ENCODE measurements at regions of chr1 and their contacts with region 1.

Region 1: GRCh38 chr1:231337472-231338269 is at the start of gene EXOC8:
- DNase-seq: peak; percentile 100
- H3K4me3 Mint-ChIP-seq: peak within 1 kb of the TSS; percentile 98
- H3K27ac Mint-ChIP-seq: peak within 1 kb of the TSS; percentile 97
- H3K4me1 Mint-ChIP-seq: peaks cover 49% of the 10 kb centered on the region
- H3K27me3 Mint-ChIP-seq: no peaks in the 10 kb centered on the region
- CTCF ChIP-seq: peak; percentile 18
- total RNA-seq, gene EXOC8: 24.0 and 28.5 TPM in 2 replicates

Region 2: DNA sequence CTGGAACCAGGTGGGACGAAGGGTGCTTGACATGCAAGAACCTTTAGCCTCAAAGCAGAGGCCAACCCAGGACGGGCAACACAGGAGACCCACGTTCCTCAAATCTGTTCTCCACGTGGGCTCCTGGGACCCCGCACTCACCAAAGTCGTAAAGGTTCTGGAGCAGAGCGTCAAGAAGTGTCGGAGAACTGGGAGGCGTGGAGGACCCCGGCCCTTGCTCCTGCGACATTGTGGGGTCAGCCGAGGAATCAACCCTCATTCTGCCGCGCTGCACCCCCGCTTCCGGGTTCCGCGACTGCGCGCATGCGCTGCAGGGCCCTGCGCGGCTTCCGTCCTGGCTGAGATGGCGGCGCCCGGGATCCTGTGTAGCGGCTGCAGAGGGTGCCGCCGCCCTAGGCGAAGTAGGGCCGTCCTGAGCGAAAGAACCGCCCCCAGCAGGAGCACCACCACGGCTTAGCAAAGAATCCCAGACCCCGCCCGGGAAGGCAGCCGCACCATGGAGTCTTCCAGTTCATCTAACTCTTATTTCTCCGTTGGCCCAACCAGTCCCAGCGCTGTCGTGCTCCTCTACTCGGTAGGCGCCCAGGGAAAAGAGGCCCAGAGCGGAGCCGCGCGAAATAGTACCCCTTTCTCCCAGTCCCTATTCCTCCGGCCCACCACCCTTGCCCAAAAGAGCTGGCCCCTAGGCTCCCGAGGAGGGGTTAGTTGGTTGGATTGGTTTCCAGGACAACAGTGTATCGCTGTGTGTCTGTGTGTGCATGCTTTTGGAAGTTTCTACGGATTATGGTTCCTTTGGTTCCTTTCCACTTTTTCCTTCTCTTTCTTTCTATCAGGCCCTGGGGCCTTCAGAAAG is 96.6 kb before region 1 on chr1 and contains the start of gene GNPAT:
- CTCF ChIA-PET with region 1: interaction called, 10 read pairs
- POLR2A ChIA-PET with region 1: interaction called, 343 read pairs
- intact Hi-C with region 1: loop called (anchors 1 kb)
- DNase-seq: peak; percentile 95
- H3K4me3 Mint-ChIP-seq: peak within 1 kb of the TSS; percentile 85
- H3K27ac Mint-ChIP-seq: peak within 1 kb of the TSS; percentile 97
- H3K4me1 Mint-ChIP-seq: peaks cover 50% of the 10 kb centered on the region
- H3K27me3 Mint-ChIP-seq: no peaks in the 10 kb centered on the region
- CTCF ChIP-seq: no peak
- total RNA-seq, gene GNPAT: 60.9 and 64.4 TPM in 2 replicates

Region 3: DNA sequence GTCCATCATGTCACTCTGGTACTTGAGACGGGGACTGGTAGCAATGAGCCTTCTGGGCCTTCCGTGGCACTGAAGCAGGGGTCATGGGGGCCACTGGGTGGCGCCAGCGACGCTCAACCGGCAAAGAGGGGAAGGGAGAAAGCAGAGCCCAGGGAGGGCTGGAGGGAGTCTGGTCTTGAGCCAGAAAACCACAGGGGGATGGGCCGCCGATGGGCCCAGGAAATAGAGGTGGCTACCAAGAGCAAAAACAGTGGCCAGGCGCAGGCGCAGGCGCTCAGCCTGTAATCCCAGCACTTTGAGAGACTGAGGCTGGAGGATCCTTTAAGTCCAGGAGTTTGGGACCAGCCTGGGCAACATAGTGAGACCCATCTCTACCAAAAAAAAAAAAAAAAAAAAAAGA is 21.8 kb before region 1 on chr1:
- CTCF ChIA-PET with region 1: interaction called, 5 read pairs
- POLR2A ChIA-PET with region 1: interaction called, 25 read pairs
- intact Hi-C with region 1: no loop called
- DNase-seq: peak; percentile 73
- H3K4me3 Mint-ChIP-seq: no peak overlapping the region
- H3K27ac Mint-ChIP-seq: no peak overlapping the region
- H3K4me1 Mint-ChIP-seq: peaks cover 6% of the 10 kb centered on the region
- H3K27me3 Mint-ChIP-seq: no peaks in the 10 kb centered on the region
- CTCF ChIP-seq: peak; percentile 69

Region 4: GRCh38 chr1:231364192-231364591 is 26.5 kb after region 1 on chr1:
- CTCF ChIA-PET with region 1: interaction called, 4 read pairs
- POLR2A ChIA-PET with region 1: interaction called, 91 read pairs
- intact Hi-C with region 1: no loop called
- DNase-seq: no peak
- H3K4me3 Mint-ChIP-seq: no peak overlapping the region
- H3K27ac Mint-ChIP-seq: no peak overlapping the region
- H3K4me1 Mint-ChIP-seq: peaks cover 7% of the 10 kb centered on the region
- H3K27me3 Mint-ChIP-seq: no peaks in the 10 kb centered on the region
- CTCF ChIP-seq: no peak

Region 5: GRCh38 chr1:231401478-231401877 is 63.8 kb after region 1 on chr1:
- CTCF ChIA-PET with region 1: no interaction called
- POLR2A ChIA-PET with region 1: interaction called, 97 read pairs
- intact Hi-C with region 1: no loop called
- DNase-seq: no peak
- H3K4me3 Mint-ChIP-seq: no peak overlapping the region
- H3K27ac Mint-ChIP-seq: no peak overlapping the region
- H3K4me1 Mint-ChIP-seq: peaks cover 36% of the 10 kb centered on the region
- H3K27me3 Mint-ChIP-seq: no peaks in the 10 kb centered on the region
- CTCF ChIP-seq: no peak

Region 6: GRCh38 chr1:231421993-231422764 is 84.5 kb after region 1 on chr1 and contains the start of gene EGLN1:
- CTCF ChIA-PET with region 1: interaction called, 5 read pairs
- POLR2A ChIA-PET with region 1: interaction called, 213 read pairs
- intact Hi-C with region 1: no loop called
- DNase-seq: peak; percentile 95
- H3K4me3 Mint-ChIP-seq: peak within 1 kb of the TSS; percentile 82
- H3K27ac Mint-ChIP-seq: peak within 1 kb of the TSS; percentile 87
- H3K4me1 Mint-ChIP-seq: peaks cover 34% of the 10 kb centered on the region
- H3K27me3 Mint-ChIP-seq: no peaks in the 10 kb centered on the region
- CTCF ChIP-seq: peak; percentile 43
- total RNA-seq, gene EGLN1: 67.3 and 68.8 TPM in 2 replicates

Region 7: DNA sequence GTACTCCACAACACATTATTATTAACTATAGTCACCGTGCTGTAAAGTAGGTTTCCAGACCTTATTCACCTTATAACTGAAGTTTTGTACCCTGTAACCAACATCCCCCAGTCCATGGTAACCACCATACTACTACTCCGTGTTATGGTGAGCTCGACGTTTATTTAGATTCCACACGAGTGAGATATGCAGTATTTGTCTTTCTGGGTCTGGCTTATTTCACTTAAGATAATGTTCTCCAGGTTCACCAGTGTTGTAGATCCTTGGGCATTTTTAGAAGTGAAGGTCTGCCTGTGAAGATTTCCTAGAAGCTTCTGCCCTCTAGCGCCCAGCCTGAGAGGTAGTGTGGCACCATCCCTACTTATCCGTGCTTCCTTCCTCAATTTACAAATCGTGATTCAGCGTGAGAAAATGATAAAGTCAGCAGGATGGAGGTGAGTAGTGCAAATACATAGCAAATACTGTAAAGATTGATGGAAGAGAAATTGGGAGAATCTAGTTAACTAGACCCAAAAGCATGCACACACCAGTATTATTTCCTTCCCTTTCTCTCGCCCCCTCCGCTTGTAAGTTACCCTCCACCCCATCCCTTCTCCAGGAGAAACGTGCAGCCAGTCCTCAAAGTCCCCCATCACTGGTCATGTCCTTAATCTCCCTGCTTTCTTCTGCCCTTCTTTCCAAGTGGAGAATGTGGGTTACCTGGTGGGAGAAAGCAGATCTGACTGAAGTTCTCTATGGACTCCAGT is 253.0 kb after region 1 on chr1:
- CTCF ChIA-PET with region 1: interaction called, 14 read pairs
- POLR2A ChIA-PET with region 1: interaction called, 8 read pairs
- intact Hi-C with region 1: no loop called
- DNase-seq: peak; percentile 85
- H3K4me3 Mint-ChIP-seq: no peak overlapping the region
- H3K27ac Mint-ChIP-seq: no peak overlapping the region
- H3K4me1 Mint-ChIP-seq: peaks cover 8% of the 10 kb centered on the region
- H3K27me3 Mint-ChIP-seq: no peaks in the 10 kb centered on the region
- CTCF ChIP-seq: peak; percentile 96

Measured in MCF 10A (cell line).